ENCODE measurements at regions of chr10 and their contacts with region 1.

Region 1: GRCh38 chr10:3239066-3239919 is 66.7 kb upstream of the PITRM1 start:
- DNase-seq: peak; percentile 61
- H3K4me3 ChIP-seq: no peak overlapping the region
- H3K27ac ChIP-seq: no peak overlapping the region
- H3K4me1 ChIP-seq: no peaks in the 10 kb centered on the region
- H3K27me3 ChIP-seq: no peaks in the 10 kb centered on the region
- CTCF ChIP-seq: peak; percentile 72 to 86 (median 84)
- POLR2A ChIP-seq: no peak

Region 2: GRCh38 chr10:3186368-3186767 is 52.9 kb before region 1 on chr10:
- intact Hi-C with region 1: no loop called
- DNase-seq: no peak
- H3K4me3 ChIP-seq: no peak overlapping the region
- H3K27ac ChIP-seq: no peak overlapping the region
- H3K4me1 ChIP-seq: no peaks in the 10 kb centered on the region
- H3K27me3 ChIP-seq: no peaks in the 10 kb centered on the region
- CTCF ChIP-seq: no peak
- POLR2A ChIP-seq: no peak

Region 3: DNA sequence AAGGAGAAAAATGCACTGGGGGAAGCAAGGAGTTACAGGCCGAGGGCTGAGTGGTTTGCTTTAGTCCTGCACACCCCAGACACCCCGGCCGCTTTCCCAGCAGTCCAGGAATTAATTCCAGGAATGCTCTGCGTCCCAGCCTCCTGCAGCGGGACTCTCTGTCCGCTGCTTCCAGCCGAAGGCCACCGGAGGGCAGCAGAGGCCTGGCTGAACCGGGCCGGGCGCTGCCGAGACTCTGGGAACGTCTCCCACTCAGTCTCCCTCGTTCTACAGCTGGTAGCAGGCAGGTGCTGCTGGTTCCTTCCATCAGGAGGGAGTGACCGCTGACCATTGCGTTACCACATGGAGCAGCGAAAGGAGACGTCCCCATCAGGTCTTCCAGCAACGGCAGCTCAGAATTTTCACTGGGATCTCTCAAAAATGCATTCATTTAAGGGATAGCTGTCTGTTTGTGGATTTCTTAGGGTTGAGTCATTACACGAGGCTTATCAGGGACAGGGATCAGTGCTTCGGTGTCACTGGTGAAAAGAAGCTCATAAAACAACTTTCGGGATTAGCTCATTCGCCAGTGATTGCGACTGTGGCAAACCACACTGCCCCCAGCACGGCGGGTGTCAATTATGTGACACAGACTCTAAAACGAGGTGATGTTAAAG is 41.8 kb before region 1 on chr10:
- intact Hi-C with region 1: loop called (anchors 5 kb)
- DNase-seq: peak; percentile 74
- H3K4me3 ChIP-seq: no peak overlapping the region
- H3K27ac ChIP-seq: no peak overlapping the region
- H3K4me1 ChIP-seq: no peaks in the 10 kb centered on the region
- H3K27me3 ChIP-seq: no peaks in the 10 kb centered on the region
- CTCF ChIP-seq: peak; percentile 66 to 92 (median 82)
- POLR2A ChIP-seq: no peak